ENCODE measurements at regions of chr10 and their contacts with region 1.

Region 1: GRCh38 chr10:91163269-91163868 is 57.1 kb upstream of the PCGF5 start:
- DNase-seq: peak; percentile 79
- ATAC-seq: peak; percentile 51
- H3K4me3 Mint-ChIP-seq: peak overlapping the region; percentile 90
- H3K27ac Mint-ChIP-seq: peak overlapping the region; percentile 92
- H3K4me1 Mint-ChIP-seq: peaks cover 53% of the 10 kb centered on the region
- H3K27me3 Mint-ChIP-seq: no peaks in the 10 kb centered on the region
- CTCF ChIP-seq: no peak

Region 2: DNA sequence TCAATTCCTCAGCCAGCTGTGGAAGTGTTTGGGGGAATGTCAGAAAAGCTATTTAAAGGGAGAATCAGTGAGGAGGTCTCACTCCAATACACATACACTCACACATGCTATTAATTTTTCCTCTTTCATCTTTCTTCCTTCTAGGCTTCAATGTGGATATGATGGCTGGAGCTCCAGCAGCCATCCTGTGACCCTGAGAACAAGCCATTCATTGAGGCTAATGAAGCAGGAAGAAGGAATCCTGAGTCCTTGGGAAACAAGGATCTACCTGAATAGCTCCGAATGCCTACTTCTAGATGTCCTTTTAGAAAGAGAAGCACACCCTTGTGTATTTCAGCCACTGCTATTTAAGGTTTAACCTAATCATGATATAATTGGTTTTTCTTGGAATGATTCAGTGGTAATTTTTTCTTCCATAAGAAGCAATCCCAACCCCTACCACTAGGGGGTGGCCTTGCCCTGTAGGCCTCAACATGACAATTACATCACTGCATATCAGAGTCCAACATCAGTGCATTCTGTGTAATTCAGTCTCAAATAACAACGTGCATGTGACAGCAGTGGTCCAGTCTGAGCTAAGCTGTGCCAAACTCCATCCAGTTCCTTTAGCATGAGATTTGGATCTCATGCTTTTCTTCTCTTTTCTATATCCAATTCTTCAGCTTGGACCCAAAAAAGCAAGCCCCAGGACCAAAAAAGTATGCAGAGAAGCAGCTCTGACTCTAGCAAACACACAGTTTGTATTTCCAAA is 157.2 kb before region 1 on chr10:
- CTCF ChIA-PET with region 1: interaction called, 15 read pairs
- POLR2A ChIA-PET with region 1: interaction called, 36 read pairs
- intact Hi-C with region 1: loop called (anchors 1 kb)
- DNase-seq: no peak
- ATAC-seq: peak; percentile 73
- H3K4me3 Mint-ChIP-seq: peak overlapping the region; percentile 74
- H3K27ac Mint-ChIP-seq: peak overlapping the region; percentile 91
- H3K4me1 Mint-ChIP-seq: peaks cover 75% of the 10 kb centered on the region
- H3K27me3 Mint-ChIP-seq: no peaks in the 10 kb centered on the region
- CTCF ChIP-seq: peak; percentile 80

Region 3: DNA sequence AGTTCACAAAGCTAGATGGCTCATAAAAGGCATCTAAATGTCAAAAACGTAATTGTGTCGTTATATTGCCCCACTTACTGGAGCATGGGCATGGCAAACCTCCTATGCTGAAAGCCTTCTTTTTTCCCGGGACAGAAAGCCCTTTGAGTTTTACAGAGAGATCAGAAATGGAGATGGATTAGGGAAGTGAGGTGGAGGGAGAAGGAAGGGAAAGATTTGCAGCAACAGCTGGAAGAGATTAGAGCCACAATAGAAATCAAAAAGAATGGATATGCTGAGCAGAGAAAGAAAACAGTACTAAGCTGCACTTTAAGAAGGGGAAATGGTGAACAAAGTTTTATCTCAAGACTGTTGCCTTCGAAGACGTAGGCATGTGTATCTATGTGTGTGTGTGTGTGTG is 40.1 kb before region 1 on chr10:
- CTCF ChIA-PET with region 1: no interaction called
- POLR2A ChIA-PET with region 1: interaction called, 3 read pairs
- intact Hi-C with region 1: loop called (anchors 5 kb)
- DNase-seq: no peak
- ATAC-seq: no peak
- H3K4me3 Mint-ChIP-seq: no peak overlapping the region
- H3K27ac Mint-ChIP-seq: no peak overlapping the region
- H3K4me1 Mint-ChIP-seq: peaks cover 1% of the 10 kb centered on the region
- H3K27me3 Mint-ChIP-seq: no peaks in the 10 kb centered on the region
- CTCF ChIP-seq: no peak

Region 4: GRCh38 chr10:91210435-91210834 is 47.1 kb after region 1 on chr10:
- CTCF ChIA-PET with region 1: interaction called, 6 read pairs
- POLR2A ChIA-PET with region 1: interaction called, 19 read pairs
- intact Hi-C with region 1: no loop called
- DNase-seq: no peak
- ATAC-seq: peak; percentile 70
- H3K4me3 Mint-ChIP-seq: peak overlapping the region; percentile 44
- H3K27ac Mint-ChIP-seq: peak overlapping the region; percentile 77
- H3K4me1 Mint-ChIP-seq: peaks cover 79% of the 10 kb centered on the region
- H3K27me3 Mint-ChIP-seq: no peaks in the 10 kb centered on the region
- CTCF ChIP-seq: no peak

Region 5: GRCh38 chr10:91409869-91410637 is 246.7 kb after region 1 on chr10 and contains the start of gene HECTD2:
- CTCF ChIA-PET with region 1: no interaction called
- POLR2A ChIA-PET with region 1: no interaction called
- intact Hi-C with region 1: loop called (anchors 1 kb)
- DNase-seq: peak; percentile 84
- ATAC-seq: peak; percentile 82
- H3K4me3 Mint-ChIP-seq: peak within 1 kb of the TSS; percentile 89
- H3K27ac Mint-ChIP-seq: peak within 1 kb of the TSS; percentile 90
- H3K4me1 Mint-ChIP-seq: peaks cover 13% of the 10 kb centered on the region
- H3K27me3 Mint-ChIP-seq: no peaks in the 10 kb centered on the region
- CTCF ChIP-seq: no peak
- total RNA-seq, gene HECTD2: 8.1 and 8.6 TPM in 2 replicates

Region 6: DNA sequence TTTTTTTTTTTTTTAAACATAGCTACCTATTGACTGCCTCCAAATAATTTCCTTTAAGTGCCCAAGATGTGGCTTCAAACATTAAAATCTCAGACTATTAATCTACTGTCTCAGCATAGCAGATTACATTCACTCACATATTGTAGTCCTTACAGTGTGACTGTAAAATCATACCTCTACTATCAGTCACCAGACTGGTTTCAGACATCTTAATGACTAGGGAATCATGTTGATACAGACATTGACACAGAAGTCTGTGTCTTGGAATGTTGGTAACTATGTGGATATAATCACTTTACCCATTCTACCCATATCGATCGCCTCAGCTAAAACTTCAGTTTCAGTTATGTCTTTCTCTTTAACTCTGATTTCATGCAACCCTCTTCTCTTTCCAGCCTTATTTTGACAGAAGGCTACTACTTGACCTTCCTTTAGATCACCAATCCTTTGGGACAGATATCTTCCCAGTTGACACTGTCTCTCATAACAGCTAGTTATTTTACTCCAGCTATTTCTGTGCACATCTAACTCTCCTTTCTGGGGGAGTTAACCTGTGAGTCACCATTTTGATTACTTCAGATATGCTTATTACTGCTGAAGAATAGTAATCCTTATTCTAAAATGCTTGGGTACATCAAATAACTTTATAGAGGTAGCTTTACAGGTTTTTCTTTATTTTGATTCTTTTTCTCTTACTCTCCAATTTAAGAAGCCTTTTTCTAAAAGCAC is 641.9 kb after region 1 on chr10:
- CTCF ChIA-PET with region 1: no interaction called
- POLR2A ChIA-PET with region 1: no interaction called
- intact Hi-C with region 1: no loop called
- DNase-seq: no peak
- ATAC-seq: no peak
- H3K4me3 Mint-ChIP-seq: no peak overlapping the region
- H3K27ac Mint-ChIP-seq: no peak overlapping the region
- H3K4me1 Mint-ChIP-seq: peaks cover 61% of the 10 kb centered on the region
- H3K27me3 Mint-ChIP-seq: no peaks in the 10 kb centered on the region
- CTCF ChIP-seq: no peak